WTC11 (cell line): ENCODE measurements at regions of chr1 and their contacts with region 1.

Region 1: GRCh38 chr1:203166566-203166940 is 9.1 kb downstream of the MYBPH start:
- DNase-seq: no peak
- ATAC-seq: peak; percentile 76
- H3K4me3 Mint-ChIP-seq: no peak overlapping the region
- H3K27ac Mint-ChIP-seq: no peak overlapping the region
- H3K4me1 Mint-ChIP-seq: peaks cover 3% of the 10 kb centered on the region; the same call in 1 of the 2 replicates
- H3K27me3 Mint-ChIP-seq: no peaks in the 10 kb centered on the region; the same call in 1 of the 2 replicates
- CTCF ChIP-seq: no peak

Region 2: DNA sequence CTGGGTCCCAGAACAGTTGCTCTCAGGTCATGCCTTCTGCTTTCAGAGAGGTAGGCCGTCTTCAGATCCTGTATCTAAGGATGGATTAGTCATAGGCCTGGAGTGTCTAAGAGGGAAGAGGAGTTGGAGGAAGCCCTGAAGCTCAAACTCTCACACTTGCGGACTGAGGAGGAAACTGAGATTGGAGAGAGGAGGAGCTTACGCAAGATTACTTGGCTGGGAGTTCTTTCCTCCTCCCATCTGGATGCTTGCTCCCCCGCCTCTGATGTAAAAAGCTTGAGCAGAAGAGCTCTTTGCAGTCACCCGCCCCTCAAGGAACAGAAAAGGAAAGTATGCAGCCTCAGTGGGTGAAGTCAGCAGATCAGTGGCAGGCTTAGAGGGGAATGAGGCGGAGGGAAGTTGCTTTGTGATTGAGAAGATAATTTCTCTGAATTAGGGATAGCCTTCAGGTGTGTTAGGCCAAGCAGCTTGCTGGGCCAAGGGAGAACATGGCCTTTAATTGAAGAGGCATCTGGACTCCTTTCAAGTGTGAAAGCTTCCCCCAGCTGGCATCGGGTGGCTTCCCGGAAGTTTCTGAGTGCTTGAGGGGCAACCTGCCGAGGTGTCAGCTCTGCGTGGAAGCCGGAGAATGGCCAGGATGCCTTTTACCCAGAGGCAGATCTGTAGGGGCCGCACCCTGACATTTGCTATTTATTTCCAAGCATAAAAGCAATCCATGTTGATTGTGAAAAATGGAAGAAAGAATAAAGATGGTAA is 32.4 kb before region 1 on chr1:
- CTCF ChIA-PET with region 1: interaction called, 79 read pairs
- POLR2A ChIA-PET with region 1: no interaction called
- DNase-seq: no peak
- ATAC-seq: peak; percentile 40
- H3K4me3 Mint-ChIP-seq: no peak overlapping the region
- H3K27ac Mint-ChIP-seq: no peak overlapping the region
- H3K4me1 Mint-ChIP-seq: peaks cover 11% of the 10 kb centered on the region
- H3K27me3 Mint-ChIP-seq: peaks cover 7% of the 10 kb centered on the region
- CTCF ChIP-seq: no peak

Region 3: GRCh38 chr1:203148125-203148524 is 18.4 kb before region 1 on chr1:
- CTCF ChIA-PET with region 1: interaction called, 26 read pairs
- POLR2A ChIA-PET with region 1: no interaction called
- DNase-seq: peak; percentile 44
- ATAC-seq: peak; percentile 50
- H3K4me3 Mint-ChIP-seq: no peak overlapping the region
- H3K27ac Mint-ChIP-seq: no peak overlapping the region
- H3K4me1 Mint-ChIP-seq: peaks cover 87% of the 10 kb centered on the region
- H3K27me3 Mint-ChIP-seq: no peaks in the 10 kb centered on the region
- CTCF ChIP-seq: no peak

Region 4: GRCh38 chr1:203229471-203230135 is 63.0 kb after region 1 on chr1 and contains the start of gene CHIT1:
- CTCF ChIA-PET with region 1: no interaction called
- POLR2A ChIA-PET with region 1: no interaction called
- DNase-seq: no peak
- ATAC-seq: no peak
- H3K4me3 Mint-ChIP-seq: no peak within 1 kb of the TSS
- H3K27ac Mint-ChIP-seq: no peak within 1 kb of the TSS
- H3K4me1 Mint-ChIP-seq: no peaks in the 10 kb centered on the region
- H3K27me3 Mint-ChIP-seq: peaks cover 24% of the 10 kb centered on the region
- CTCF ChIP-seq: no peak
- total RNA-seq, gene CHIT1: 0.15 to 0.39 TPM (median 0.21 TPM) in 3 replicates